Activated naive CD8-positive, alpha-beta T cell treated with anti-CD3 and anti-CD28 coated beads, Interleukin-2, amount 10 ng/mL, durations not matched to agents 7 days and 5 days (primary cell): ENCODE measurements at regions of chr10 and their contacts with region 1.

Region 1: GRCh38 chr10:35126530-35127296 is at the start of gene CREM:
- DNase-seq: peak; percentile 99
- ATAC-seq: peak; percentile 84
- H3K4me3 Mint-ChIP-seq: peak within 1 kb of the TSS; percentile 91
- H3K27ac Mint-ChIP-seq: peak within 1 kb of the TSS; percentile 99
- H3K4me1 Mint-ChIP-seq: peaks cover 45% of the 10 kb centered on the region
- H3K27me3 Mint-ChIP-seq: no peaks in the 10 kb centered on the region
- total RNA-seq, gene CREM: 78.6 to 86.5 TPM

Region 2: GRCh38 chr10:35090162-35090954 is 36.4 kb before region 1 on chr10 and contains the start of gene CUL2:
- POLR2A ChIA-PET with region 1: interaction called, 10 read pairs
- DNase-seq: peak; percentile 93
- ATAC-seq: peak; percentile 97
- H3K4me3 Mint-ChIP-seq: peak within 1 kb of the TSS; percentile 94
- H3K27ac Mint-ChIP-seq: peak within 1 kb of the TSS; percentile 97
- H3K4me1 Mint-ChIP-seq: peaks cover 36% of the 10 kb centered on the region
- H3K27me3 Mint-ChIP-seq: peaks cover 4% of the 10 kb centered on the region
- total RNA-seq, gene CUL2: 35.4 to 37.1 TPM

Region 3: DNA sequence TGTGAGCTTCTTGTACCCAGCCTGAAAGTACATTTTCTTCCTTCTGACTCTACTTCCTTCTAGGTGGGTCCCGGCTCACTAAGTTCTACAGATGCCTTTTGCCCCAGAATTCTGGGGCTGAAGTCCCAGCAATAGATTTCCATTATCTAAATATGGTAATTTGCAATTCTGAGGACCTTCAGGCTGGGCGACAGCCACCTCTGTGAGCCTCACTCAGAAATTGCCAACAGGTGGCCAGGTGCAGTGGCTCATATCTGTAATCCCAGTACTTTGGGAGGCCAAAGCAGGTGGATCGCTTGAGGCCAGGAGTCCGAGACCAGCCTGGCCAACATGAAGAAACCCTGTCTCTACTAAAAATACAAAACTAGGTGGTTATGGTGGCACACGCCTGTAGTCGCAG is 23.6 kb after region 1 on chr10:
- POLR2A ChIA-PET with region 1: interaction called, 66 read pairs
- DNase-seq: no peak
- ATAC-seq: no peak
- H3K4me3 Mint-ChIP-seq: peak overlapping the region; percentile 60
- H3K27ac Mint-ChIP-seq: peak overlapping the region; percentile 85
- H3K4me1 Mint-ChIP-seq: peaks cover 59% of the 10 kb centered on the region
- H3K27me3 Mint-ChIP-seq: no peaks in the 10 kb centered on the region

Region 4: DNA sequence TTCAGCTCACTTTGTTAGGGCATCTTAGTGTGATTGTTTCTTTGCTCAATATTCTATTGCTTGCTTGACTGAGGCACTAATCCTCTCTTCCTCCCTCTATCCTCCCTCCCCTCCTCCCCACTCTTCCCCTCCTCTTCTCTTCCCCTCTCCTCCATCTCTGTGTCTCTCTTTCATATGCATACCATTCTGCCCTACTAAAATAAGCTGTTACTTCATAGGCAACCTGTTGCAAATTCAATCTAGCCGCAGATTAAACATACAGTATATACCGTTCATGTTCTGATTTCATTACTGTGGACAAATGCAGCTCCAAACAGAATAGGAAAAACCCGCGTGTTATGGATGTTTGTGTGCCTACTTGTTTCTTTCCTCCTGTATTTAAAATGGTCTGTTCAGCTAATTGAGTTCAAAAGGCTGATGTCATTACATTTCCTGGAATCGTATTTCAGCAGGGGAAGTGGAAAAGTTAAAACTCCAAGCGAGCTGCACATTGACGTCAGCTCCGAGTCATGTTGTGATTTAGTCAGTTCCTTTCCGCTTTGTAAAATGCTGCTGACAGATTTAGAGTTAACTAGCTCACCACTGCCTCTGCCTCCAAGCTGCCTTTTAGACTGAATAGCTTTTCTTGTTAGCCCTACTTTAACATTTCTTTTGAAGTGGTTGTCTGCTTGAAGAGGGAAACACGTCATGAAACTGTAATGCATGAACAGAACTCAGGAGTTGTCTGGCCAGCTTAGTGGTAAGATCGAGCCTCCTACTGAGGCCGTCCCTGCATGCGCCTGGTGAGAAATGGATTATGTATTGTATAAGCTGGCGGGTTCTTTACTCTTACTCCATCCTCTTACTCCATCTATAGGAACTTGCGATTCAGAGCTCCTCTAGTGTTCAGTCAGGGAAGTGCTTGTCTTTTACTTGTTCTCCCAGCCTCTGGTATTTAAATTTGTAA is 68.9 kb after region 1 on chr10:
- POLR2A ChIA-PET with region 1: interaction called, 201 read pairs
- DNase-seq: peak; percentile 63
- ATAC-seq: peak; percentile 92
- H3K4me3 Mint-ChIP-seq: peak overlapping the region; percentile 87
- H3K27ac Mint-ChIP-seq: peak overlapping the region; percentile 96
- H3K4me1 Mint-ChIP-seq: peaks cover 45% of the 10 kb centered on the region
- H3K27me3 Mint-ChIP-seq: no peaks in the 10 kb centered on the region

Region 5: GRCh38 chr10:35202050-35202449 is 75.3 kb after region 1 on chr10:
- POLR2A ChIA-PET with region 1: interaction called, 201 read pairs
- DNase-seq: no peak
- ATAC-seq: peak; percentile 45
- H3K4me3 Mint-ChIP-seq: peak overlapping the region; percentile 51
- H3K27ac Mint-ChIP-seq: peak overlapping the region; percentile 69
- H3K4me1 Mint-ChIP-seq: peaks cover 55% of the 10 kb centered on the region
- H3K27me3 Mint-ChIP-seq: no peaks in the 10 kb centered on the region

Region 6: GRCh38 chr10:35208536-35208935 is 81.8 kb after region 1 on chr10:
- POLR2A ChIA-PET with region 1: interaction called, 155 read pairs
- DNase-seq: peak; percentile 60
- ATAC-seq: peak; percentile 94
- H3K4me3 Mint-ChIP-seq: peak overlapping the region; percentile 81
- H3K27ac Mint-ChIP-seq: peak overlapping the region; percentile 94
- H3K4me1 Mint-ChIP-seq: peaks cover 56% of the 10 kb centered on the region
- H3K27me3 Mint-ChIP-seq: no peaks in the 10 kb centered on the region

Region 7: GRCh38 chr10:35218339-35218955 is 91.7 kb after region 1 on chr10:
- POLR2A ChIA-PET with region 1: interaction called, 155 read pairs
- DNase-seq: peak; percentile 74
- ATAC-seq: peak; percentile 86
- H3K4me3 Mint-ChIP-seq: peak overlapping the region; percentile 61
- H3K27ac Mint-ChIP-seq: peak overlapping the region; percentile 75
- H3K4me1 Mint-ChIP-seq: peaks cover 29% of the 10 kb centered on the region
- H3K27me3 Mint-ChIP-seq: peaks cover 4% of the 10 kb centered on the region